ENCODE measurements at regions of chr10 and their contacts with region 1.

Region 1: DNA sequence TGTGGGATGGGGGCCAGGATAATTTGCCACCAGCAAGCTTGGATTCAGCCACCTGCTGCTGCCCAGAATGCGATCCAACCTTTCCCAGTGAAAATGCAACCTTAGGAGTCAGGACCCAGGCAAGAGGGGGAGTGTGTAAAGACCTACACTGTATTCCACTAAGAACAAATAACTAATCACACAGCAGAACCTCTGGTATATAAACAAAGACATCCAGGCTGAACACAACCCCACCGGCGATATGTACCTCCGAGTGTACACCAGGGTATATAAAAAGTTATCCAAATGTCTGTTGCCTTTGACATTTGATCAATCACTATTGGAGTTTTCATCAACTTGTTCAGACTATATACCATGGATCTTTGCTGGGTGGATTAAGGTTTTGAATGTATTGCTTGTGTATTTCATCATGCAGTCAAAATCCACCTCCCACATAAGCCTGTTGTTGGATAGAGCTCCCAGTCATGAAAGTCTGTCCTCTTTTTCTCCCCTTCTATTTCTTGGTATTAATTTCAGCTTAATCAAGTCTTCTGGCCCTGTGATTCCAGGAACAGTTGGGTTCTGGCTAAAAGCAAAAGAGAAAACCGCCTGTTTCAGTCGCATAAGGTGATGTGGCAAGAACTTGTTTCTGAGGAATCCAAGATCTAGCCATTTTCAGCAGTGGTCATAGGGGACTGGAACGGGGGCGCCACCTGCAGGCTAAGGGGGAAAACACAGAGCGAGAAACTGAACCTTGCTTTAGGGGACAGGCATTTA is 290.7 kb downstream of the CCDC3 start:
- DNase-seq: peak; percentile 92
- H3K4me3 Mint-ChIP-seq: no peak overlapping the region
- H3K27ac Mint-ChIP-seq: peak overlapping the region; percentile 77
- H3K4me1 Mint-ChIP-seq: peaks cover 72% of the 10 kb centered on the region
- H3K27me3 Mint-ChIP-seq: no peaks in the 10 kb centered on the region

Region 2: GRCh38 chr10:12121673-12122072 is 589.1 kb before region 1 on chr10:
- CTCF ChIA-PET with region 1: no interaction called
- POLR2A ChIA-PET with region 1: interaction called, 4 read pairs
- intact Hi-C with region 1: loop called (anchors 2 kb)
- DNase-seq: no peak
- H3K4me3 Mint-ChIP-seq: peak overlapping the region; percentile 64
- H3K27ac Mint-ChIP-seq: peak overlapping the region; percentile 97
- H3K4me1 Mint-ChIP-seq: peaks cover 33% of the 10 kb centered on the region
- H3K27me3 Mint-ChIP-seq: no peaks in the 10 kb centered on the region

Region 3: GRCh38 chr10:12214763-12215218 is 496.0 kb before region 1 on chr10:
- CTCF ChIA-PET with region 1: interaction called, 17 read pairs
- POLR2A ChIA-PET with region 1: no interaction called
- intact Hi-C with region 1: no loop called
- DNase-seq: peak; percentile 15
- H3K4me3 Mint-ChIP-seq: peak overlapping the region; percentile 41
- H3K27ac Mint-ChIP-seq: peak overlapping the region; percentile 79
- H3K4me1 Mint-ChIP-seq: peaks cover 16% of the 10 kb centered on the region
- H3K27me3 Mint-ChIP-seq: no peaks in the 10 kb centered on the region

Region 4: DNA sequence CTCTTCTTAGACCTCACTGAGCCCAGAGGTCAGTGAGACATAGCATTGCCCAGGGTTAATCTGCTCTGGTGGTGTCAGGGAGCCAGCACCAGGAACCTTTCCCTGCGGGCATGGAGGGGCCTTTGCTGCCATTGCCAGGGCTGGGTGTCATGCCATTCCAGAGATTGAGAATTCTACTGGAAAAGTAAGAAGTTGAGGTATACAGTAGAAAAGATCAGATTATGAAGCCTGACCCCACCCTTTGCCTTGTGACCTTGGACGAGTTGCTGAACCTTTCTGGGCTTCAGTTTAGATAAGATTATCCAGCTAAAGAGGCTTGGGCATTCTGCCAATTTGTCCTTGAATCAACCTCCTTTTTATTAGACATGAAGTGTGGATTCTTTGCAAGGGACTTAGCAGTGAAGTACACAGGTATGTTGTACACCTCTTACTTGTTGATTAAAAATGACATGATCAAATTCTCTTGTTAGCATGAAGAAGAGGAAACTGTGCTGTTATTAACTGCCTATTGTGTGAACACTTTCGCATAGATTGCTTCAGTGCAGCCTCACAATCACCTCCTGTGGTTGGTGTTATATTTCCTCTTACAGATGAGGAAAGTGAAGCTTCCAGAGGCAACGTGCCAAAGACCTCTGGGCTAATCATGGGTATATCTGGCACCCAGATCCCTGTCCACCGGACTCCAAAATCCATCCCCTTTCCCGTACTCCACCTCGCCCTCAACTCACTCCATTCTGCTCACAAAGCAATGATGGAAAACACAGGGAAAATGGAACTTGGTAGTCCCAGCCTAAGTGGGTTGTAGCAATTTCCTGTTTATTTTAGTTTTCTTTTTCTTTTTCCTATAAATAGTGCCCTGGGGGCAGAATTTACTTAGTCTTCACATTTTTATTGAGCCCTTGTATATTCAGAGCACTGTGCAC is 210.1 kb before region 1 on chr10:
- CTCF ChIA-PET with region 1: no interaction called
- POLR2A ChIA-PET with region 1: no interaction called
- intact Hi-C with region 1: no loop called
- DNase-seq: no peak
- H3K4me3 Mint-ChIP-seq: no peak overlapping the region
- H3K27ac Mint-ChIP-seq: no peak overlapping the region
- H3K4me1 Mint-ChIP-seq: peaks cover 38% of the 10 kb centered on the region
- H3K27me3 Mint-ChIP-seq: no peaks in the 10 kb centered on the region

Region 5: GRCh38 chr10:12594448-12594944 is 116.3 kb before region 1 on chr10:
- CTCF ChIA-PET with region 1: no interaction called
- POLR2A ChIA-PET with region 1: no interaction called
- intact Hi-C with region 1: loop called (anchors 1 kb)
- DNase-seq: peak; percentile 75
- H3K4me3 Mint-ChIP-seq: peak overlapping the region; percentile 36
- H3K27ac Mint-ChIP-seq: peak overlapping the region; percentile 94
- H3K4me1 Mint-ChIP-seq: peaks cover 70% of the 10 kb centered on the region
- H3K27me3 Mint-ChIP-seq: no peaks in the 10 kb centered on the region

Region 6: GRCh38 chr10:12690525-12691126 is 20.1 kb before region 1 on chr10:
- CTCF ChIA-PET with region 1: interaction called, 14 read pairs
- POLR2A ChIA-PET with region 1: interaction called, 3 read pairs
- intact Hi-C with region 1: no loop called
- DNase-seq: peak; percentile 45
- H3K4me3 Mint-ChIP-seq: no peak overlapping the region
- H3K27ac Mint-ChIP-seq: peak overlapping the region; percentile 47
- H3K4me1 Mint-ChIP-seq: peaks cover 19% of the 10 kb centered on the region
- H3K27me3 Mint-ChIP-seq: no peaks in the 10 kb centered on the region

Region 7: GRCh38 chr10:12782537-12782936 is 71.8 kb after region 1 on chr10:
- CTCF ChIA-PET with region 1: interaction called, 65 read pairs
- POLR2A ChIA-PET with region 1: interaction called, 10 read pairs
- intact Hi-C with region 1: loop called (anchors 5 kb)
- DNase-seq: peak; percentile 58
- H3K4me3 Mint-ChIP-seq: no peak overlapping the region
- H3K27ac Mint-ChIP-seq: no peak overlapping the region
- H3K4me1 Mint-ChIP-seq: peaks cover 45% of the 10 kb centered on the region
- H3K27me3 Mint-ChIP-seq: no peaks in the 10 kb centered on the region

Region 8: GRCh38 chr10:12835709-12836108 is 124.9 kb after region 1 on chr10:
- CTCF ChIA-PET with region 1: no interaction called
- POLR2A ChIA-PET with region 1: no interaction called
- intact Hi-C with region 1: no loop called
- DNase-seq: no peak
- H3K4me3 Mint-ChIP-seq: no peak overlapping the region
- H3K27ac Mint-ChIP-seq: no peak overlapping the region
- H3K4me1 Mint-ChIP-seq: no peaks in the 10 kb centered on the region
- H3K27me3 Mint-ChIP-seq: no peaks in the 10 kb centered on the region

Region 9: GRCh38 chr10:13074561-13075451 is 364.0 kb after region 1 on chr10:
- CTCF ChIA-PET with region 1: interaction called, 26 read pairs
- POLR2A ChIA-PET with region 1: no interaction called
- intact Hi-C with region 1: loop called (anchors 1 kb)
- DNase-seq: peak; percentile 80
- H3K4me3 Mint-ChIP-seq: no peak overlapping the region
- H3K27ac Mint-ChIP-seq: no peak overlapping the region
- H3K4me1 Mint-ChIP-seq: peaks cover 3% of the 10 kb centered on the region
- H3K27me3 Mint-ChIP-seq: peaks cover 17% of the 10 kb centered on the region

Region 10: GRCh38 chr10:13206546-13207443 is 496.0 kb after region 1 on chr10:
- CTCF ChIA-PET with region 1: no interaction called
- POLR2A ChIA-PET with region 1: no interaction called
- intact Hi-C with region 1: no loop called
- DNase-seq: no peak
- H3K4me3 Mint-ChIP-seq: no peak overlapping the region
- H3K27ac Mint-ChIP-seq: no peak overlapping the region
- H3K4me1 Mint-ChIP-seq: no peaks in the 10 kb centered on the region
- H3K27me3 Mint-ChIP-seq: no peaks in the 10 kb centered on the region

Measured in activated CD4-positive, alpha-beta memory T cell treated with anti-CD3 and anti-CD28 coated beads for 36 hours (primary cell).